CD4-positive, alpha-beta memory T cell (primary cell): ENCODE measurements at regions of chr13 and their contacts with region 1.

Region 1: GRCh38 chr13:48769107-48769704 is 115.5 kb downstream of the CYSLTR2 start:
- DNase-seq: peak; percentile 83 to 85 (median 85)
- H3K4me3 ChIP-seq: no peak overlapping the region
- H3K4me3 Mint-ChIP-seq: peak overlapping the region in 1 of 8 donors; percentile 11
- H3K27ac ChIP-seq: no peak overlapping the region
- H3K27ac Mint-ChIP-seq: peak overlapping the region in 2 of 7 donors; percentile 5 to 58
- H3K4me1 ChIP-seq: no peaks in the 10 kb centered on the region
- H3K4me1 Mint-ChIP-seq: peaks cover 3 to 15% (median 5%) of the 10 kb centered on the region in 4 donors
- H3K27me3 ChIP-seq: no peaks in the 10 kb centered on the region
- H3K27me3 Mint-ChIP-seq: peaks cover 6 to 8% of the 10 kb centered on the region in 2 donors

Region 2: GRCh38 chr13:48400850-48401291 is 368.3 kb before region 1 on chr13:
- CTCF ChIA-PET with region 1: interaction called, 3 read pairs
- POLR2A ChIA-PET with region 1: no interaction called
- intact Hi-C with region 1: loop called (anchors 1 kb)
- DNase-seq: peak in 2 of 5 donors; percentile 19 to 33
- H3K4me3 ChIP-seq: peak overlapping the region in 1 of 2 donors; percentile 21
- H3K4me3 Mint-ChIP-seq: peak overlapping the region; percentile 1 to 81 (median 67)
- H3K27ac ChIP-seq: peak overlapping the region; percentile 0
- H3K27ac Mint-ChIP-seq: peak overlapping the region; percentile 53 to 94 (median 77)
- H3K4me1 ChIP-seq: peaks cover 79% of the 10 kb centered on the region
- H3K4me1 Mint-ChIP-seq: peaks cover 47 to 89% (median 67%) of the 10 kb centered on the region in 4 donors
- H3K27me3 ChIP-seq: no peaks in the 10 kb centered on the region
- H3K27me3 Mint-ChIP-seq: no peaks in the 10 kb centered on the region

Region 3: DNA sequence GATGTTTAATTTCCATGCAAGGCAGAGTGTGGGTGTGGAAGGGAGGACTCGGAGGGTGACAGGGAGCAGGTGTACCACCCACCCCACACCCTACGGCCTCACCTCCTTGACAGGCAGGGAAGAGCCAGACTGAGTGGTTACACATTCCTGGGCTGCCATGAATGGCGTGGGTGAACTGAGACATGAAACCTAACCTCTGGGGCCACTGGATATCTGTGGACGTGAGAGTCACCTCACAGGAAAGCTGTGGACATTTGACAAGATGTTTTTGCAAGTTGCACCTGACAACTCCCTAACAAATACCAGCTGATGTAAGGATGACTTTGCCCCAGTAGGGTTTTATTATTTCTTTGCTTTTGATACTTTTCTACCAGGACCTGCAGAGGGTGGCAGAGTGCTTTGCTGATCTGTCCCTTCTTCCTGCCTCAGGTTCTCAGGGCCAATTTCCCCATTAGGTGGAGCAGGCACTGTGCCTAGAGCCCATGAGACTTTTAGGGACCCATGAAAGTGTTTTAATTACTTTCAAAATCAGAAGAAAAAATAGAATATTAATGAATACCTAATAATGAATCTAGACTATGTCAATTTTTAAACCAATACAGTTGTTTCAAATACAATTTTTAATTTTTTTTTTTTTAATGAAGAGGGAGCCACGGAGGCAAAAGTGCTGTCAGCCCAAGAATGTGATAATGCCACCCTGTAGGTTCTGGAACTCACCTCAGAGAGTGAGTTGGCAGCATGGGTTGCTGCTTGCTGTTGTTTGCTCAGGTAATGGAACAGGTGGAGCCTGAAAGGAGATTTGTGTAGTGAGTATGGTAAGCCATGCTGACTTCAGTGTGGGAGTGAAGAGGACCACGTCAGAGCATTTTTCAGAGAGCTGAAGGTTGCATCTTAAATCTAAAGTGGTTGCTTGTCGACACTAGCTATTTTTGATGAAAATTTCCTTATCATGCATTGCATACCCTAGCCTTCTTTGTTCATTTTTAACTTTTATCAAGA is 173.5 kb before region 1 on chr13:
- CTCF ChIA-PET with region 1: interaction called, 71 read pairs
- POLR2A ChIA-PET with region 1: no interaction called
- intact Hi-C with region 1: no loop called
- DNase-seq: peak; percentile 51 to 71 (median 65)
- H3K4me3 ChIP-seq: no peak overlapping the region
- H3K4me3 Mint-ChIP-seq: no peak overlapping the region
- H3K27ac ChIP-seq: no peak overlapping the region
- H3K27ac Mint-ChIP-seq: peak overlapping the region in 1 of 7 donors; percentile 37
- H3K4me1 ChIP-seq: no peaks in the 10 kb centered on the region
- H3K4me1 Mint-ChIP-seq: peaks cover 0 to under 1% (median 0%) of the 10 kb centered on the region in 4 donors
- H3K27me3 ChIP-seq: no peaks in the 10 kb centered on the region
- H3K27me3 Mint-ChIP-seq: no peaks in the 10 kb centered on the region

Region 4: DNA sequence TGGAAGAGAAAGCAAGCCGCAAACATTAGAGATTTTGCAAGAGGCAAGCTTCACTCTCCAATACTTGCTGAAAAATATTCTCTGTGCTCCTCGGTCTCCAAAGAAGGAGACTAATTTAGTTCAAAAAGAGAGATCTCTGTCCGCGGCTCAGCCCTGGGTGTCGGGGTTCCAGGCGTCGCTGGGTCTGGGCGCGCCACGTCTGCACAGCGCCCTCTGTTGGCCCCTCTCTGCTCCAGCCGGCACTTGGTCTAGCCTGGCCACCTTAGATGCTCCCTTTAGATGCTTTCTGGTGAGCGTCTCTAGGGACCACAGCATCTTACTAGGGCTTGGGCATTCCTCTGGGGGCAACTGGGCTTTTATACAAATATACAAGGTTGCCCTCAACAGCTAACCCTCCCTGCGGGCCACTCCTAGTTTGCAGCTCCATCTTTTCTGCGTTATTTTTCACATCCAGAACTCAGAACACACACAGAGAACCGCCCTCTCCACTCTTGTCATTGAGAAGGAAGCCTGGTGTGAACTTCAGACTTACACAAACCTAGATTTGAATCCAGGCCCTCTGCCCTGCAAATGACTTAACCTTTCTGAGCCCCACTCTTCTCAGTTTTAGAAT is 37.1 kb before region 1 on chr13:
- CTCF ChIA-PET with region 1: interaction called, 22 read pairs
- POLR2A ChIA-PET with region 1: no interaction called
- intact Hi-C with region 1: loop called (anchors 1 kb)
- DNase-seq: peak in 4 of 5 donors; percentile 38 to 54 (median 50)
- H3K4me3 ChIP-seq: no peak overlapping the region
- H3K4me3 Mint-ChIP-seq: peak overlapping the region; percentile 60 to 89 (median 84)
- H3K27ac ChIP-seq: no peak overlapping the region
- H3K27ac Mint-ChIP-seq: peak overlapping the region in 3 of 7 donors; percentile 53 to 75 (median 60)
- H3K4me1 ChIP-seq: no peaks in the 10 kb centered on the region
- H3K4me1 Mint-ChIP-seq: peaks cover 10 to 17% (median 15%) of the 10 kb centered on the region in 4 donors
- H3K27me3 ChIP-seq: no peaks in the 10 kb centered on the region
- H3K27me3 Mint-ChIP-seq: peaks cover 0 to 3% of the 10 kb centered on the region in 2 donors

Region 5: DNA sequence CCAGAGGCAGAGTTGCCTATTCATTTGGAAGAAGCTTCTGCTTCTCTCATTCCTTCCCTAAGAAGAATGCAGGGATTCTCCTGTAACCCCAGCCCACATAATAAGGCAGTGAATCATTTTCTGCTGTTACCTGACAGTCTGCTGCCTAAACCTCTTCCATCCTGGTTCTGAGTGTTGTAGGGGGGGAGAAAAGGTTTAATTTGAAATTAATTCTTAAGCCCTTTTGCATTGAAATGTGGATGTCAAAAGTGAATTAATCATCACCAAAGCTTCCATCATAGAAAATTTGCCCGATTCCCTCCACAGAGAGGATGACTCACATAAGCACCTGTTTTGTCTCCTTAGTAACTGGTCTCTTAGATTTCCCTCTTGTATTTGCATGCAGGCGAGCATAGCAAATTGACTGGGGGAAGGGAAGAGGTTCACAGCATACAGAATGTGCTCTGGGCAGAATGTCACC is 59.8 kb after region 1 on chr13:
- CTCF ChIA-PET with region 1: no interaction called
- POLR2A ChIA-PET with region 1: no interaction called
- intact Hi-C with region 1: no loop called
- DNase-seq: peak in 2 of 5 donors; percentile 5 to 13
- H3K4me3 ChIP-seq: no peak overlapping the region
- H3K4me3 Mint-ChIP-seq: peak overlapping the region in 3 of 8 donors; percentile 32 to 52 (median 41)
- H3K27ac ChIP-seq: no peak overlapping the region
- H3K27ac Mint-ChIP-seq: peak overlapping the region in 5 of 7 donors; percentile 7 to 80 (median 9)
- H3K4me1 ChIP-seq: peaks cover 21% of the 10 kb centered on the region
- H3K4me1 Mint-ChIP-seq: peaks cover 11 to 25% (median 24%) of the 10 kb centered on the region in 4 donors
- H3K27me3 ChIP-seq: no peaks in the 10 kb centered on the region
- H3K27me3 Mint-ChIP-seq: no peaks in the 10 kb centered on the region